Transverse colon (tissue), 4 donors: ENCODE measurements at regions of chr21 and their contacts with region 1.

Region 1: DNA sequence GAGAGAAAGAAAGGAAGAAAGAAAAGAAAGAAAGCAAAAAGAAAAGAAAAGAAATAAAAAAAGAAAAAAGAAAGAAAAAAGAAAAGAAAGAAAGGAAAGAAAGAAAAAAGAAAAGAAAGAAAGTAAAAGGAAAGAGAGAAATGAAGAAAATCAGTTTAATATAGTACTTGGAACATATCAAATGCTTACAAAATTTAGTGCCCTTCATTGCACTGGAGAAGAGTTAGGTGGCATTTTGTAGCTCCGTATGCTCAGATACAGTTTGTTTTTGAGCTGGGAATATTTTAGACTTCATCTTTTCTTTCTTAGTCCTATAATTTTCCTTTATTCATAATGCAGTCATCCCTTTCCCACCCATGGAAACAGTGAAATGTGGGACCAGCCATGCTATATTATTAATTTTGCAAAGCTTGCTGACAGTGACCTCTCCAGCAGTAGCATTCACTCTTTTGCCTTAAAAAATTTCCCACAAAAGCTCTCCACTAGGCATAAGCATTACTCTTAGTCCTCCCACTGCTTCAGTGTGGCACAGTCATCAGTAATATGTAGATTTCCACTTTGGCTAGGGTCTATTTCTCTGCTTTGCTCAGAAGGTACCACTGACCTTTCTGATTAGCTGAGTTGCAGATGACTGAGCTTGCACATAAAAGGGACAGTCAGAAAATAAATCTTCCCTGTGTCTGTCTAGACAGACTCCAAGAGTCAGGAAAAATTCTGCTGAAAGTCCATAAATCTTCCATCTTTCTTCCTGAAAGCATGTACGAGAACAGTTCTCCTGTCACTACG is 56.3 kb upstream of the APP start:
- DNase-seq: no peak
- H3K4me3 ChIP-seq: no peak overlapping the region
- H3K27ac ChIP-seq: no peak overlapping the region
- H3K4me1 ChIP-seq: no peaks in the 10 kb centered on the region
- H3K27me3 ChIP-seq: no peaks in the 10 kb centered on the region
- CTCF ChIP-seq: no peak
- EP300 ChIP-seq: no peak
- POLR2A ChIP-seq: no peak

Region 2: GRCh38 chr21:25862596-25862995 is 364.3 kb before region 1 on chr21:
- in situ Hi-C with region 1: no loop called
- intact Hi-C with region 1: no loop called
- DNase-seq: no peak
- H3K4me3 ChIP-seq: no peak overlapping the region
- H3K27ac ChIP-seq: peak overlapping the region in 3 of 4 donors; percentile 21 to 57 (median 22)
- H3K4me1 ChIP-seq: peaks cover 0 to 5% (median 2%) of the 10 kb centered on the region in 4 donors
- H3K27me3 ChIP-seq: no peaks in the 10 kb centered on the region
- CTCF ChIP-seq: peak; percentile 53 to 75 (median 61)
- EP300 ChIP-seq: no peak
- POLR2A ChIP-seq: no peak

Region 3: GRCh38 chr21:26238646-26239045 is 11.7 kb after region 1 on chr21:
- in situ Hi-C with region 1: no loop called
- intact Hi-C with region 1: no loop called
- DNase-seq: no peak
- H3K4me3 ChIP-seq: no peak overlapping the region
- H3K27ac ChIP-seq: no peak overlapping the region
- H3K4me1 ChIP-seq: no peaks in the 10 kb centered on the region
- H3K27me3 ChIP-seq: no peaks in the 10 kb centered on the region
- CTCF ChIP-seq: no peak
- EP300 ChIP-seq: no peak
- POLR2A ChIP-seq: no peak

Region 4: DNA sequence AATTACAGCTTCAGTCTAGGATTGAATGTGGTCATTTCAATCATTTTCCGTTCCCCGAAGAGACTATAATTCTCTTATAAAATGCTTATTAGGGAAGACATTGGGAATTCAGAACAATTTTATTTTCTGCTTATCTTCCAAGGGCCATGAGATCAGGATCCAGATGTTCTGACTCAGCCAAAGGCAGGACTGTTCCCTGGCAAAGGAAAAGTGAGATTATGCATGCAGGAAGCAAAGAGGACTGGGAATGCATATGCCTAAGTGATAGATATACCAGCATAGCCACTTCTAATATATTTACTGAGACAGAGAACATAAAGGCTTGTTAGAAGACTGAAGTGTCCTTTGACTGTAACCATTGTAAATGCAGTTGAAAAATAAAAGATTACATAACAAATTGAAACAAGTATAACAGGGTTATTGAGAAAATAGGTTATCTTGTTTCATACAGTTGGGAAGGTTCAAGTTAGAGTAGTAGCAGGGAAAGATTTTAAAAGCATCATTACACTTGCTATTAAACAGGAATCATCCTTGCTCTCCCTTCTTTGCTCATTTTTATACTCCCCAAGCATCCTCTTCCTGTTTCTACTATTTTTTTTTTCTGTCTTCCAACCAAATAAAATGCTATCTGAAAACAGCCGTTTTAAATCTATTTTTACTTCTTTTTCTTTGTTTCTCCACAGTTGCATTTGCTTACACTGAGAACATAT is 1179.5 kb after region 1 on chr21:
- in situ Hi-C with region 1: no loop called
- intact Hi-C with region 1: loop called (anchors 5 kb)
- DNase-seq: no peak
- H3K4me3 ChIP-seq: no peak overlapping the region
- H3K27ac ChIP-seq: no peak overlapping the region
- H3K4me1 ChIP-seq: peaks cover 0 to 22% (median 5%) of the 10 kb centered on the region in 4 donors
- H3K27me3 ChIP-seq: no peaks in the 10 kb centered on the region
- CTCF ChIP-seq: no peak
- EP300 ChIP-seq: no peak
- POLR2A ChIP-seq: no peak